CD4-positive, alpha-beta memory T cell (primary cell): ENCODE measurements at regions of chr19 and their contacts with region 1.

Region 1: DNA sequence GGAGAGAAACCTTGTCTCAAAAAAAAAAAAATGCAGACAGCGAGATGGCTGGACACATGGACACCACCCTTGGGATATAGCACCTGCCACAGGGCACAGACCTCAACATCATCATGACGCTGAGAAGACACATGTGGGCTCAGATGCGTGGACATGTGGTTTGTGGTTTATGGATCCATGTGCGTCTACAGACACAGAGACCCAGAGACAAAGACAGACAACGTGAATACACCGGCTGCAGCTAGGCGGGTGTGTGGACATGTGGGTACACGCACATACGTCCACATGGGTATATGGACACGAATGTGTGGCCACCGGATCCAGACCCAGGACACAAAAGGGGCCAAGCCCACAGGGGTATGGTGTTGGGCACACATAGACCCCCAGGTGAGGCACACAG is 1.3 kb downstream of the TNFSF14 start:
- DNase-seq: peak in 3 of 5 donors; percentile 33 to 73 (median 36)
- H3K4me3 ChIP-seq: peak overlapping the region; percentile 64 to 81
- H3K4me3 Mint-ChIP-seq: peak overlapping the region; percentile 97 to 100 (median 98)
- H3K27ac ChIP-seq: peak overlapping the region; percentile 71
- H3K27ac Mint-ChIP-seq: peak overlapping the region; percentile 94 to 99 (median 97)
- H3K4me1 ChIP-seq: peaks cover 50% of the 10 kb centered on the region
- H3K4me1 Mint-ChIP-seq: peaks cover 19 to 51% (median 37%) of the 10 kb centered on the region in 4 donors
- H3K27me3 ChIP-seq: no peaks in the 10 kb centered on the region
- H3K27me3 Mint-ChIP-seq: no peaks in the 10 kb centered on the region

Region 2: GRCh38 chr19:6639439-6639838 is 29.3 kb before region 1 on chr19:
- CTCF ChIA-PET with region 1: interaction called, 4 read pairs
- POLR2A ChIA-PET with region 1: interaction called, 20 read pairs
- intact Hi-C with region 1: loop called (anchors 2 kb)
- DNase-seq: no peak
- H3K4me3 ChIP-seq: no peak overlapping the region
- H3K4me3 Mint-ChIP-seq: peak overlapping the region in 2 of 8 donors; percentile 15 to 68
- H3K27ac ChIP-seq: no peak overlapping the region
- H3K27ac Mint-ChIP-seq: peak overlapping the region in 4 of 7 donors; percentile 10 to 57 (median 41)
- H3K4me1 ChIP-seq: peaks cover 35% of the 10 kb centered on the region
- H3K4me1 Mint-ChIP-seq: peaks cover 22 to 42% (median 33%) of the 10 kb centered on the region in 4 donors
- H3K27me3 ChIP-seq: no peaks in the 10 kb centered on the region
- H3K27me3 Mint-ChIP-seq: no peaks in the 10 kb centered on the region